H1 (cell line): ENCODE measurements at regions of chr5 and their contacts with region 1.

Region 1: DNA sequence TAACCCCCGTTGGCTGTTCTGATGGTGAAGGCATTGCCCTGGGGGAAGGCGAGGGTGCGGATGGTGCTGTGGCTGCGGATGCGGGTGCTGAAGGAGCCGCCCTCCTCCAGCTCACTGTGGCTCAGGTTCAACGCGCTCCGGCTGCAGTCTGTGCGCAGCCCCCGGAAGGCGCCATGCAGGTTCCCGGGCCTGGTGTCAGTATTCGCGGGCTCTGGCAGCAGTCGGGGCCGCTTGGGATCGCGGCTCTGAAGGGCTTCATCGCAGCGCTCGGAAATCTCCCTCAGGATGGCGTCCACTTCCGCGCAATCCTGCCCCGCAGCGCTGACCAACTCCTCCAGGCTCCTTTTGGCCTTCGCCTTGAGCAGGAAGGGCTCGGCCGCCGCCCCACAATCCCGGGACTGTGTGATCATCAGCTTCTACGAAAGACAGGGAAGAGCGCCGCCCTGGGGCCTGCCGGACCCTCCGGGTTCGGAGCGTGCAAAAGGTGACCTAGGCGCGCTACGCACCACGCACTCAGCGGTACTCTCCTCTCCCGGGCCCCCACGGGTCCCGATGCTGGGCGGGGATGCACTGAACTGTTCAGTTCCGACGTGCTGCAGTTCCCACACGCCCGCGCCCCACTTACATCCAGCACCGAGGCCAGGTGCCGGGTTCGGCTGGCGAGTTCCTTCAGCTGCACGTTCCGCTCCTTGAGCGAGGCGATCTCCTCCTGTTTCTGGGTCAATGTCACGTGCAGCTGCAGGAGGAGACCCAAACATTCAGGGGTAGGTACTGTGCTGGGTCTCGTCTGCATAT is 6.5 kb downstream of the MCIDAS start:
- DNase-seq: peak in 1 of 2 experiments; percentile 81
- H3K4me3 ChIP-seq: peak overlapping the region; percentile 35 to 68 (median 60)
- H3K27ac ChIP-seq: no peak overlapping the region
- H3K4me1 ChIP-seq: peaks cover 0 to 15% (median 5%) of the 10 kb centered on the region in 4 experiments; a peak in 6 of 7 replicates
- H3K27me3 ChIP-seq: peaks cover 46 to 62% (median 59%) of the 10 kb centered on the region in 4 experiments
- CTCF ChIP-seq: peak; percentile 34 to 55 (median 45)
- EP300 ChIP-seq: no peak
- POLR2A ChIP-seq: no peak
- RAD21 ChIP-seq: peak; percentile 27 to 53; a peak in 3 of 4 replicates

Region 2: DNA sequence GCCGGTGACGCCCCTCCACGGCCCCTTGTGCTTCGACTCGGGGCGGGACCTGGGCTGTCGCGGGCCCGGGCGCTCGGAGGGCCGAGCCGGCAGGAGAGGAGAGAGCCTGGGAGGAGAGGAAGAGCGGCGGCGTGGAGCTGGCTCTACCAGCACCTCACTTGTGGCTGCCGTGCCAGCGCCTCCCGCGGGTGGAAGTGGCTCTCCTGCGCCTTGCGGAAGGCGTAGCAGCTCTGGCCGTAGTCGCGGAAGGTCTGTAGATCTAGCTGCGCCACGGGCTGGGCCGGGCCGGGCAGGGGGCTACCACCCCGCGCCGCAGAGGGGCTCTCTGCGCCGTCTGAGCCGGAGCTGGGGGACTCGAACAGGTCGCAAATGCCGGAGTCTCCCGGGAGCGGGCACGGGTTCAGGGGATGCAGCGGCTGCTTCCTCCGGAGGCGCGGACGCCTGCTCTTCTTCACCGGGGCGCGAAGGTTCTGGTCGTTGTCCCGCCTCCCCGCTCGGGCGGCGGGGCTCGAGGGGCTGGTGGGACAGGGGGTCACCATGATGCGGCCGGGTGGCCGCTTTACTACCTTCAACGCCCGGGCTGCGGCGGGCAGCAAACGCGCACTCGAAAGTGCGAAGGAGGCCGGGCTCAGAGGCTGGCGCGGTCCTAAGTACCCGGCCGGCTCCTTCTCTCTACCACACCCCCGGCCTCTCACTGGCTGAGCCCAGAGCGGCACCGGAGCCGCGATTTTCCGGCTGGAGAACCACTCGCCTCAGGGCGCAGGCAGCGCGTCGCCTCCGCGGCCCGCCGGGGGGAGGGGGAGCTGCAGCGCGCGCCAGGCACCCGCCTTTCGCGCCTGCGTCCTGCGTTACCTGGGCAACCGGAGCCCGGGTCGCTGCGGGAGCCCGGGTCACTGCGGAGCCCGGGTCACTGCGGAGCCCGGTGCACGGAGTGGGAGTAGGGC is 12.7 kb after region 1 on chr5 and contains the start of gene CCNO:
- CTCF ChIA-PET with region 1: interaction called, 105 read pairs
- POLR2A ChIA-PET with region 1: interaction called, 21 read pairs
- DNase-seq: peak; percentile 65 to 87
- H3K4me3 ChIP-seq: peak within 1 kb of the TSS; percentile 45 to 70 (median 60)
- H3K27ac ChIP-seq: no peak within 1 kb of the TSS
- H3K4me1 ChIP-seq: peaks cover 0 to 25% (median 13%) of the 10 kb centered on the region in 4 experiments; a peak in 6 of 7 replicates
- H3K27me3 ChIP-seq: peaks cover 56 to 85% (median 79%) of the 10 kb centered on the region in 4 experiments
- CTCF ChIP-seq: no peak
- EP300 ChIP-seq: no peak
- POLR2A ChIP-seq: no peak
- RAD21 ChIP-seq: no peak
- total RNA-seq, gene CCNO: 0.27 and 0.41 TPM in 2 replicates

Region 3: GRCh38 chr5:55278778-55279177 is 58.2 kb after region 1 on chr5:
- CTCF ChIA-PET with region 1: no interaction called
- POLR2A ChIA-PET with region 1: no interaction called
- DNase-seq: no peak
- H3K4me3 ChIP-seq: no peak overlapping the region
- H3K27ac ChIP-seq: no peak overlapping the region
- H3K4me1 ChIP-seq: no peaks in the 10 kb centered on the region
- H3K27me3 ChIP-seq: no peaks in the 10 kb centered on the region
- CTCF ChIP-seq: no peak
- EP300 ChIP-seq: no peak
- POLR2A ChIP-seq: no peak
- RAD21 ChIP-seq: no peak